ENCODE measurements at regions of chr1 and their contacts with region 1.

Region 1: GRCh38 chr1:91569411-91570119 is 68.9 kb downstream of the CDC7 start:
- DNase-seq: peak; percentile 91
- ATAC-seq: peak; percentile 99

Region 2: GRCh38 chr1:91054780-91055481 is 514.6 kb before region 1 on chr1:
- intact Hi-C with region 1: no loop called
- DNase-seq: no peak
- ATAC-seq: no peak

Region 3: DNA sequence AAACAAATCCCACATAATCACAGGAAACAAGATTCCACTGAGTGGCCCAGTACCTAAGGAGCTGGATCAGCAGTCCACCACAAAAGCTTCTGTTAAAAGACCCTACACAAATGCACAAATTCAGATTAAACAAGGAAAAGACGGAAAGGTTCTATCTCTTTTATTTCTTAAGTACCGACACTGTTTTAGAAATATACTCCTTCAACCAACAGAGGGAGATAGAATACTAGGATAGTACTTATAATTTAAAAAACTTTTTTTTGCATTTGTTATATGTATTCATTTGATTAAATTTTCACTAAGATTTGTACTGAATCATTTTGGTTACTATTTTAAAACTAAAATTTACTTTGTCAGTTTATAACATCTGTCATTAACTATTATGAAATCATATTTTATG is 56.4 kb before region 1 on chr1:
- intact Hi-C with region 1: no loop called
- DNase-seq: no peak
- ATAC-seq: peak in 1 of 2 donors; percentile 47

Region 4: DNA sequence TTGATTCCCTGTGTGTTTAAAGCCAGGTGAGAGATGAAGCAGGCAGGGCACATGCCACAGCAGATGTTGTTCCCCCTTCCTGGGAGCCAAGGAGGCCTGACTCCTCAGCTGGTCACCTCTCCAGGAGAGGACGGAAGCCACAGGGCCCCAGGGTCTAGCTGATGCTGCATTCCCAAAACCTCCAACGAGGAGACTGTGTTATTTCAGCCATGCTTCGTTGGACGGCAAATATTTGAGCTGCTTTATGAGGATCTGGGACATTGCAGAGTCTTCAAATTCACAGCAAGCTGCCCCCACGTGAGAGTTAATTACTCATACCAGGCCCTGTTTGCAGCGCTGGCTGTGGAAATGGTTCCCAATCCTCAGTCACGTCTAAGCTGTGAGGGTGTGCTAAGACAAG is 16.4 kb after region 1 on chr1:
- intact Hi-C with region 1: loop called in 1 of 2 experiments (anchors 2 kb)
- DNase-seq: no peak
- ATAC-seq: no peak